Transverse colon (tissue), 4 donors: ENCODE measurements at regions of chr4 and their contacts with region 1.

Region 1: GRCh38 chr4:15084780-15085179 is 82.5 kb downstream of the CPEB2 start:
- DNase-seq: no peak
- H3K4me3 ChIP-seq: no peak overlapping the region
- H3K27ac ChIP-seq: no peak overlapping the region
- H3K4me1 ChIP-seq: no peaks in the 10 kb centered on the region
- H3K27me3 ChIP-seq: no peaks in the 10 kb centered on the region
- CTCF ChIP-seq: no peak
- EP300 ChIP-seq: no peak
- POLR2A ChIP-seq: no peak

Region 2: DNA sequence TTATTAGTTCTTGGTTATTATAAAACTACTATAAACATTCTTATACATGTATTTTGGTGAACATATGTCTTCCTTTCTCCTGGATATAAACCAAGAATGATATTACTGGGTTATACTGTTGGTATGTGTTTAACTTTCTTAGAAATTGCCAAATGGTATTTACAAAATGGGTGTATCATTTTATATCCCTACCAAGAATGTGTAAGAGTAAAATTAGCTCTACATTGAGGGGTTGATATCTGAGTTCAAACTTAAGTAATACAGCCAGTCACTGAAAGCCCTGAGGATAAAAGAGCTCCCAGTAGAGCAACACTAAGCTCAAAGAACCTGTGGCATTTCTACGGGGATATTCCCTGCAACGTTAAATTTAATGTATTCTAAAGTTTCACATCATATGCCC is 800.8 kb before region 1 on chr4:
- in situ Hi-C with region 1: no loop called
- intact Hi-C with region 1: loop called (anchors 5 kb)
- DNase-seq: no peak
- H3K4me3 ChIP-seq: no peak overlapping the region
- H3K27ac ChIP-seq: no peak overlapping the region
- H3K4me1 ChIP-seq: no peaks in the 10 kb centered on the region
- H3K27me3 ChIP-seq: no peaks in the 10 kb centered on the region
- CTCF ChIP-seq: no peak
- EP300 ChIP-seq: no peak
- POLR2A ChIP-seq: no peak